ENCODE measurements at regions of chr14 and their contacts with region 1.

Region 1: GRCh38 chr14:71753126-71753830 is 179.0 kb upstream of the RGS6 start:
- DNase-seq: peak; percentile 94
- ATAC-seq: peak; percentile 85
- H3K4me3 ChIP-seq: peak overlapping the region; percentile 46; the same call in 1 of the 2 replicates
- H3K27ac ChIP-seq: no peak overlapping the region
- H3K4me1 ChIP-seq: peaks cover 5% of the 10 kb centered on the region
- H3K27me3 ChIP-seq: no peaks in the 10 kb centered on the region
- CTCF ChIP-seq: peak; percentile 98

Region 2: GRCh38 chr14:71050204-71050823 is 703.0 kb before region 1 on chr14:
- CTCF ChIA-PET with region 1: interaction called, 4 read pairs
- POLR2A ChIA-PET with region 1: no interaction called
- intact Hi-C with region 1: loop called (anchors 2 kb)
- DNase-seq: peak; percentile 49
- ATAC-seq: peak; percentile 82
- H3K4me3 ChIP-seq: no peak overlapping the region
- H3K27ac ChIP-seq: no peak overlapping the region
- H3K4me1 ChIP-seq: no peaks in the 10 kb centered on the region
- H3K27me3 ChIP-seq: no peaks in the 10 kb centered on the region
- CTCF ChIP-seq: peak; percentile 64

Region 3: DNA sequence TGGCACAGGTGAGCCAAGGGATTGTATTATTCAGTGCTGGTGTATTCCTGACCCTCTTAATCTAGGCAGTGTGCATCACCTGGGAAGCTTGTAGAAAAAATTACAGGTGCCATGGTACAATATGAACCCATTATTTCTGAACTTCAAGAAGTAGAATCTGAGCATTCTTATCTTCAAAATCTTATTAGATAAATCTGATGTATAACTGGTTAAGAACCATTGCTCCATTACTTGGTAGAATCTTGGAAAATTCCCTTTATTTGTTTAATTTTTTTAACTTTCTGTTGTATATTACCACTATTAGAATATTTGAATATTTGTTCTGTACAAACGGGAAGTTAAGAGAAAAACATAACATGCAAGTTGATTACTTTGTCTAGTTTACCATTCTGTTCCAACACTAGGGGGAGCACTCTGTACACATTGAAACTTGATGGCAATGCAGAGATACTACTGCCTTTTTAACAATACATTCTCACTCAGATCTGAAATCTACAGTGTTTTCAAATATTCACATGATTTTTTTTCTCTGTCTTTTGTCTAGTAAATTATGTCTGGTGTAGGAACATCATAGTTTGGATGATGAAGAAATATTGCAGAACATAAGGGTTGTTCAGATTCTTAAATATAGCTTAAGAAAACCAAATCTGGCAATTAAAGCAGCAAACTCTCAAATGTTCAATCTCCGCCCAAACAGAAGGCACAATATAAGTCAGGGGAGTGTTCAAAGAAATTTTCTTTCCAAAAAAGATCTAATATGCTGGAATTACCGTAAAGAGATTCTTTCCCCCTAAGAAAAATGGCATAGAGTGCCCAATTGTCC is 649.4 kb before region 1 on chr14:
- CTCF ChIA-PET with region 1: interaction called, 8 read pairs
- POLR2A ChIA-PET with region 1: no interaction called
- intact Hi-C with region 1: loop called (anchors 1 kb)
- DNase-seq: peak; percentile 78
- ATAC-seq: peak; percentile 89
- H3K4me3 ChIP-seq: no peak overlapping the region
- H3K27ac ChIP-seq: no peak overlapping the region
- H3K4me1 ChIP-seq: peaks cover 7% of the 10 kb centered on the region; the same call in 1 of the 2 replicates
- H3K27me3 ChIP-seq: no peaks in the 10 kb centered on the region
- CTCF ChIP-seq: peak; percentile 96

Region 4: DNA sequence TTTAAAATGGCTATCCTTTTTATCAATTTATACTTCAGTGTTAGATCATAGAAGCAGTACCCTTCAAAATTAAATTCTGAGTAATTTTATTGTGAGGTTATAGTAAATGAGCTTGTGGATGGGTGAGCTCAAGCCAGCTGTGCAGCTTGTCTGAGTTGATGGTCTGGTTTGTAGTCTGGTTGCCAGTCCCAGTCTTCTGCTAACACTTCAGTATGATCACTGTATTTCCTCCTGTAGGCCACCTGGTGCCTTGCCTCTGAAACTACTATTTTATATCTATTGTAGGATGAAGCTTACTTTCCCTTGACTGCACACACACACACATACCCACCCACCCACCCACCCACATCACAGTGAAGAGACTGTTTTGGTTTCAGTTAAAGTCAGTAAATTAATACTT is 349.6 kb before region 1 on chr14:
- CTCF ChIA-PET with region 1: interaction called, 4 read pairs
- POLR2A ChIA-PET with region 1: no interaction called
- intact Hi-C with region 1: loop called (anchors 2 kb)
- DNase-seq: peak; percentile 51
- ATAC-seq: peak; percentile 85
- H3K4me3 ChIP-seq: no peak overlapping the region
- H3K27ac ChIP-seq: no peak overlapping the region
- H3K4me1 ChIP-seq: peaks cover 16% of the 10 kb centered on the region; the same call in 1 of the 2 replicates
- H3K27me3 ChIP-seq: no peaks in the 10 kb centered on the region
- CTCF ChIP-seq: 0 out of 2 replicates have a peak, but pooled peaks have one; percentile 23

Region 5: GRCh38 chr14:71720978-71721624 is 32.2 kb before region 1 on chr14:
- CTCF ChIA-PET with region 1: interaction called, 5 read pairs
- POLR2A ChIA-PET with region 1: no interaction called
- intact Hi-C with region 1: loop called (anchors 1 kb)
- DNase-seq: peak; percentile 74
- ATAC-seq: peak; percentile 88
- H3K4me3 ChIP-seq: no peak overlapping the region
- H3K27ac ChIP-seq: no peak overlapping the region
- H3K4me1 ChIP-seq: no peaks in the 10 kb centered on the region
- H3K27me3 ChIP-seq: no peaks in the 10 kb centered on the region
- CTCF ChIP-seq: peak; percentile 86

Region 6: DNA sequence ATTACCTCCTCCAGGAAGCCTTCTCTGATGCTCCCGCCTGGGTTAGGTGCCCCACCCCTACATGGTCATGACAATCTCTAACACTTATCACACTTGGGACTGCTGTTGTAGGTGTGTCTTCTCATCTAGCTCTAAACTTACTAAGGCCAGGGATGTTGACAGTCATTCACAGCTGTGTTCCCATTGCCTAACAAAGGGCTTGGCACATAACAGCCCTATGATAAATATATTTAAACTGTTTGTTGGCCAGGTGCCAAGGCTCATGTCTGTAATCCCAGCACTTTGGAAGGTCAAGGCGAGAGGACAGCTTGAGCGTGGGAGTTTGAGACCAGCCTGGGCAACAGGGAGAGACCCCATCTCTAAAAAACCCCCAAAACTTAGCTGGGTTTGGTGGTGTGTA is 80.2 kb after region 1 on chr14:
- CTCF ChIA-PET with region 1: no interaction called
- POLR2A ChIA-PET with region 1: no interaction called
- intact Hi-C with region 1: no loop called
- DNase-seq: no peak
- ATAC-seq: no peak
- H3K4me3 ChIP-seq: no peak overlapping the region
- H3K27ac ChIP-seq: no peak overlapping the region
- H3K4me1 ChIP-seq: 0 out of 2 replicates have a peak, but pooled peaks cover 5% of the 10 kb centered on the region
- H3K27me3 ChIP-seq: peaks cover 8% of the 10 kb centered on the region; the same call in 1 of the 2 replicates
- CTCF ChIP-seq: no peak

Region 7: DNA sequence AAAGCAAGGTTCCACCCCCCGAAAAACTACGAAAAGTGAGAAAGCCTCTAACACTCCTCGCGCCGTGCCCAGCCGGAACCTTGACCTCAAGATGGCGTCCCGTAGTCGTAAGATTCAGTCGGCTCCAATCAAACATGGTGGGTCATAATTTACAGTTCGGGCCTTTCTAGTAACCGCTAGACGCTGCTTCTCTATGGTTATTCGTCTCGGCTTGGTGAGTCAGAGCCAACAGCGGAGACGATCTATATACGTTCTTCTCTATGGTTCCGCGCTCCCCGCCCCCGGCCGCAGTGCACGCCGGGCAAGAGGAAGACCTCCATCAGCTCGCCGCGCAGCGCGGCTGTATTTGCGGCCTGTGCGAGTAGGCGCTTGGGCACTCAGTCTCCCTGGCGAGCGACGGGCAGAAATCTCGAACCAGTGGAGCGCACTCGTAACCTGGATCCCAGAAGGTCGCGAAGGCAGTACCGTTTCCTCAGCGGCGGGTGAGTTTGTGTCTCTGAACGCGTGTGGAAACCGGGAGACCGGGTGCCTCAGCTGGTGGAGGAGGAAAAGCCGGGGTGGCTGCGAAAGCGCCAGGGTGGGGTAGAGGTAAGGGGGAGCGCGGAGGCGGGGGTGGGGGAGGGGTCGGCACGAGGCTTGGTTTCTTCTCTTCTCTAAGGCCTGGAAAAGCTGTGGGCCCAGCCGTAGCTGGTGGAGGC is 1305.1 kb after region 1 on chr14 and contains the start of gene RBM25:
- CTCF ChIA-PET with region 1: no interaction called
- POLR2A ChIA-PET with region 1: no interaction called
- intact Hi-C with region 1: no loop called
- DNase-seq: peak; percentile 99
- ATAC-seq: peak; percentile 94
- H3K4me3 ChIP-seq: peak within 1 kb of the TSS; percentile 86
- H3K27ac ChIP-seq: peak within 1 kb of the TSS; percentile 78
- H3K4me1 ChIP-seq: peaks cover 22% of the 10 kb centered on the region
- H3K27me3 ChIP-seq: no peaks in the 10 kb centered on the region
- CTCF ChIP-seq: no peak; the same call in 1 of the 2 replicates
- total RNA-seq, gene RBM25: 53.2 and 64.7 TPM in 2 replicates